A549 (cell line): ENCODE measurements at regions of chr11 and their contacts with region 1.

Region 1: DNA sequence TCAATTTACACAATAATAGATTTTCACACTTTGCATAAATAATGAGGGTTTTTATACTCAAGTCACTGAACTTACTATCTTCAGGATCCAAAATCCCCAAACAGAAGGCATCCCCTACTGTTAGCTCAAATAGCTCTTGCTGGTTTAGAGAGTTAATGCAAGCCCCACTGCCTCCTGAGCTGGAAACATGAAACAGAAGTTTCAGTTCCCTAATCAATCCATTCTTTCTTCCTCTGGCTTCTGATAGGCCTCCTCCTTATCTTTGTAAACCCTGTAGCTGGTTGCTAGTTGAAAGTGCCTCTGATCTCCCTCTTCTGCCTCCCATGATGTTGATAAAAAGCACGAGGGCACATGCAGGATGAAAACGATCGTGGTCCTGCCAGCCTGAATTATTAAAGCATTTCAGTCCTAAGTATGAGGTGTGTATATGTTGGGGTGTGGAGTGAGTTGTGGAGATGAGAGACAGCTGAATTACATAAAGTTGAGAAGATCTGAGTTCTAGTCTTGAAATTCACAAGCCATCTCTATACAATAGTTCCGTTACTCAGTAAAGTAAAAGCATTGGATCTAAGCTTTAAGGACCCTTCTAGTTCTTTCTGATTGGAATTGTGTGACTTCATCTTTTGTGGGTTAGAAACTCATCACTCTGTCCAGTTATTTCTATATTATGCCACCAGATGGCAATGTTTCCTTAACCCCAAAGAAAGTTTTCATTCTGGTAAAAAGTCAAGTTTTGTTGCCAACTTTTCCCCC is 35.0 kb upstream of the EHF start:
- DNase-seq: peak; percentile 49 to 79
- ATAC-seq: peak; percentile 79 to 83
- H3K4me3 ChIP-seq: no peak overlapping the region
- H3K27ac ChIP-seq: peak overlapping the region; percentile 84 to 91
- H3K4me1 ChIP-seq: peaks cover 32% of the 10 kb centered on the region
- CTCF ChIP-seq: peak; percentile 88
- EP300 ChIP-seq: no peak
- POLR2A ChIP-seq: no peak
- RAD21 ChIP-seq: peak; percentile 96 to 99

Region 2: GRCh38 chr11:34565417-34566207 is 20.3 kb before region 1 on chr11:
- CTCF ChIA-PET with region 1: interaction called, 21 read pairs
- POLR2A ChIA-PET with region 1: no interaction called
- DNase-seq: peak; percentile 14 to 37
- ATAC-seq: peak in 1 of 2 experiments; percentile 80; a peak in 3 of 6 replicates
- H3K4me3 ChIP-seq: no peak overlapping the region
- H3K27ac ChIP-seq: peak overlapping the region in 1 of 2 experiments; percentile 26; a peak in 1 of 6 replicates
- H3K4me1 ChIP-seq: peaks cover 11% of the 10 kb centered on the region
- CTCF ChIP-seq: peak; percentile 48
- EP300 ChIP-seq: no peak
- POLR2A ChIP-seq: no peak
- RAD21 ChIP-seq: peak; percentile 53 to 75

Region 3: DNA sequence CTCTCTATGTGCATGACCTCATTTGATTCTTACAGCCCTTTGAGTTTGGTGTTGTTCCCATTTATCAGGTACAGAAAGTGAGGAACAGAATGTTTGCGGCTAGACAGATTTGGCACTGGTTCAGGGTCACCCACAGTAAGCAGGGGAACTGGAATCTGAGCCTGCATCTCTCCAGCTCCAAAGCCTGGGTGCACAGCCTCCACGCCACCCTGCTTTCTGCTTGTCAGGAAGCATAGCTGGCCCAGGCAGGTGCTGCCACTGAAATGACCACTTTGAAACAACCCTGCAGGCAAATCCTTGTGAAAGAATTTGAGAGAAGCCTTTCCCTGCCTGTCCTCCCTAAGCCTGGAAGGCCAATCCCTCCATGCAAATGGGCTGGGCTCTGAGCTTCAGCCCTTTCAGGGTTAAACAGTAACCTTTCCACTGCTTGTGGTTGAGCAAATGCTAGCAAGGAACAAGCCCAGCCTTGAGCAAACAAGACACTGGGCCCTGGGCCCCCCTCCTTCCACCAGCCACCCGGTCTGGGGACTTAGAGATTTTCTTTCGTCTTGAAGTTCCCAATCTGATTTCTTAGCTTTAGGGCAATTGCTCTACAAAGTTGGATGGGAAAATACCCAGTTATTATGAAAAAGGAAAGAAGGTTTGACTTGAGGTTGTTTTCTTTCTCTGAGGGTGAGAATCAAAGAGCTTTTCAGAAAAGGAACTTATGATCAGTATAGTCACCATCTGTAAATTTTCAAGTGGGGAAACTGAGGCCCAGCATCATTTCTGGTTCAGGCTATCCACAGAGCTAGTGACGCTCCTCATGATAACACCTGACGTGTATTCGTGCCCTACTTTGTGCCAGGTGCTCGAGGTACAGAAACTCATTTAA is 54.4 kb after region 1 on chr11:
- CTCF ChIA-PET with region 1: interaction called, 63 read pairs
- POLR2A ChIA-PET with region 1: interaction called, 3 read pairs
- DNase-seq: peak; percentile 96 to 98
- ATAC-seq: peak; percentile 96 to 98
- H3K4me3 ChIP-seq: no peak overlapping the region
- H3K27ac ChIP-seq: peak overlapping the region; percentile 94 to 99
- H3K4me1 ChIP-seq: peaks cover 88% of the 10 kb centered on the region
- CTCF ChIP-seq: no peak; the same call in 2 of the 3 replicates
- EP300 ChIP-seq: peak; percentile 83 to 90; a peak in 3 of 5 replicates
- POLR2A ChIP-seq: peak; percentile 33; the same call in 1 of the 2 replicates
- RAD21 ChIP-seq: peak; percentile 39 to 69; a peak in 4 of 5 replicates

Region 4: GRCh38 chr11:34738237-34738636 is 152.3 kb after region 1 on chr11:
- CTCF ChIA-PET with region 1: interaction called, 12 read pairs
- POLR2A ChIA-PET with region 1: no interaction called
- DNase-seq: peak in 1 of 2 experiments; percentile 20
- ATAC-seq: no peak
- H3K4me3 ChIP-seq: no peak overlapping the region
- H3K27ac ChIP-seq: no peak overlapping the region
- H3K4me1 ChIP-seq: no peaks in the 10 kb centered on the region
- CTCF ChIP-seq: no peak
- EP300 ChIP-seq: no peak
- POLR2A ChIP-seq: no peak
- RAD21 ChIP-seq: no peak

Region 5: GRCh38 chr11:34890812-34891211 is 304.9 kb after region 1 on chr11:
- CTCF ChIA-PET with region 1: interaction called, 142 read pairs
- POLR2A ChIA-PET with region 1: no interaction called
- DNase-seq: peak in 1 of 2 experiments; percentile 68
- ATAC-seq: peak in 1 of 2 experiments; percentile 67; a peak in 3 of 6 replicates
- H3K4me3 ChIP-seq: no peak overlapping the region
- H3K27ac ChIP-seq: peak overlapping the region; percentile 71 to 76
- H3K4me1 ChIP-seq: peaks cover 43% of the 10 kb centered on the region
- CTCF ChIP-seq: peak; percentile 81
- EP300 ChIP-seq: no peak
- POLR2A ChIP-seq: no peak
- RAD21 ChIP-seq: peak; percentile 88 to 95

Region 6: GRCh38 chr11:34926101-34926830 is 340.4 kb after region 1 on chr11:
- CTCF ChIA-PET with region 1: interaction called, 10 read pairs
- POLR2A ChIA-PET with region 1: no interaction called
- DNase-seq: peak in 1 of 2 experiments; percentile 53
- ATAC-seq: peak; percentile 54 to 66; a peak in 3 of 6 replicates
- H3K4me3 ChIP-seq: no peak overlapping the region
- H3K27ac ChIP-seq: peak overlapping the region in 1 of 2 experiments; percentile 3; a peak in 1 of 6 replicates
- H3K4me1 ChIP-seq: peaks cover 52% of the 10 kb centered on the region
- CTCF ChIP-seq: peak; percentile 92
- EP300 ChIP-seq: no peak
- POLR2A ChIP-seq: no peak
- RAD21 ChIP-seq: peak; percentile 93 to 94